ENCODE measurements at regions of chr5 and their contacts with region 1.

Region 1: DNA sequence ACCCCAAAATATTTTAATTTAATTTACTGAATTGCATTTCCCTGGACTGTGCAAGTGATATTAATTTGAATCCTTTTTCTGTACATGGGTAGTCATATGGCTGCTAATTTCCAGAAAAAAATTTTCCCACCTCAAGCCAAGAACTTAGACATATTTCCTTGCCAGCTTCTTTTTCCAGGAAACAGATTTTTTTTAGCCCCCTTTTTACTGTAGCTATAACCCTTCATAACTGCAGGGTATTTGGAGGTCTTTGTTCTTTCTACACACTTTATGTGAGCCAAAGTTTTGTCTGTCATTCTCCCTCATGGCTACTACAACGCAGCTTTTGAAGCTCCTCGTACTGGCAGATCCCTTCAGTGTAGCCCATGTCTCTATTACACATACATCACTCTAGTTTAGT is 261.2 kb upstream of the PIK3R1 start:
- DNase-seq: no peak
- ATAC-seq: no peak

Region 2: DNA sequence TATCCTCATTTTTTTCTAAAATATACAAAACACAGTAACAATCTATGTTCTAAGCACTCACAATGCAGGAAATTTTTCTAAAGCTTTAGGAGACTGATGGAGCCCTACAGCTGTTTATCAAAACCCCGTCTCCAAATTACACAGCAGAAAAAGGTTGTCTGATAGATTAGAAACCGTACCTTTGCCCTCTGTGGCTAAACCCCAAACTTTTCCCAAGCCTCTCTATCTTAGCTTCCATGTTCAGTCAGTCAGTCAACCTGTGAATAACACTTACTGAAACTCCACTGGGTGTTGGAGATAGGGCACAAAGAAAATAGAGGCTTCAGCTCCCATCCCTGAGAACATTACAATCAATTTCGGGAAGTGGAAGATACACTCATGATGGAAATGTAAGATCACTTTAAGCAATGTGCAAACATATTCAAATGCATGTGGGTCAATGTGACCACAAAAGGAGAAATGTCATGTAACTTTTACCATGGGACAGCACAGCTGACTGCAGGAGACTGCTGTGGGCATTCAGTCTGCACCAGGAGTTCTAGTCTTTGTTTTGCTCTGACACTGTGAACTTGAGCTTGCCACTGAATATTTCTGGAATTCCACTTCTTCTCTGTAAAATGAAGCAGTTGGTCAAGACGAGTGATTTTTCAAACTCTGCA is 18.3 kb before region 1 on chr5:
- intact Hi-C with region 1: loop called (anchors 2 kb)
- DNase-seq: no peak
- ATAC-seq: no peak

Region 3: DNA sequence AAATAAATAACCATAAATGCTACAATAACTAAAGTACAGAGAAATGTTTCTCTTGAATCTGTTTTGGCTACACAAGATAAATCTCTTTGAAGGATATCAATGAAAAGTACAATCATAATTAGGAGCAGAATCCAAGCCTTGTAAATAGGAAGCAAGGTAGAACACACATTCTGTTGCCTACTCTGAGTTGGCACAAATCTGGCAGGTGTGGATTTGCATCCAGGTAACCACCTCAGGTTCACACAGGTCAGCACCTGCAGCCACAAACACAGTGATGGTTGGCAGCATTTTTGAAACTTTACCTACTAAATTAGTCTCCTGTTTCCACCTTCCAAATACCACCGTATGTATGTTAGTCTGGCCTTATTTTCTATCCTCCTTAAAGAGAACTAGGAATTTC is 155.9 kb after region 1 on chr5:
- intact Hi-C with region 1: no loop called
- DNase-seq: no peak
- ATAC-seq: no peak